Activated T-helper 1 cell treated with anti-CD3 and anti-CD28 coated beads, Interleukin-12 subunit alpha, Interleukin-12 subunit beta, Interleukin-2, Interleukin-4 antibody, amounts not matched to agents 30 ng/mL and 10 ng/mL and 1 ng/mL, durations not matched to agents 14 hours and 24 hours and 36 hours (primary cell): ENCODE measurements at regions of chr1 and their contacts with region 1.

Region 1: GRCh38 chr1:207404849-207405525 is 49.1 kb upstream of the CR2 start:
- DNase-seq: no peak
- H3K4me3 Mint-ChIP-seq: no peak overlapping the region
- H3K27ac Mint-ChIP-seq: no peak overlapping the region
- H3K4me1 Mint-ChIP-seq: peaks cover 21% of the 10 kb centered on the region
- H3K27me3 Mint-ChIP-seq: peaks cover 2% of the 10 kb centered on the region

Region 2: GRCh38 chr1:207077470-207078377 is 327.3 kb before region 1 on chr1:
- intact Hi-C with region 1: loop called (anchors 1 kb)
- DNase-seq: peak; percentile 60
- H3K4me3 Mint-ChIP-seq: no peak overlapping the region
- H3K27ac Mint-ChIP-seq: no peak overlapping the region
- H3K4me1 Mint-ChIP-seq: no peaks in the 10 kb centered on the region
- H3K27me3 Mint-ChIP-seq: peaks cover 19% of the 10 kb centered on the region

Region 3: DNA sequence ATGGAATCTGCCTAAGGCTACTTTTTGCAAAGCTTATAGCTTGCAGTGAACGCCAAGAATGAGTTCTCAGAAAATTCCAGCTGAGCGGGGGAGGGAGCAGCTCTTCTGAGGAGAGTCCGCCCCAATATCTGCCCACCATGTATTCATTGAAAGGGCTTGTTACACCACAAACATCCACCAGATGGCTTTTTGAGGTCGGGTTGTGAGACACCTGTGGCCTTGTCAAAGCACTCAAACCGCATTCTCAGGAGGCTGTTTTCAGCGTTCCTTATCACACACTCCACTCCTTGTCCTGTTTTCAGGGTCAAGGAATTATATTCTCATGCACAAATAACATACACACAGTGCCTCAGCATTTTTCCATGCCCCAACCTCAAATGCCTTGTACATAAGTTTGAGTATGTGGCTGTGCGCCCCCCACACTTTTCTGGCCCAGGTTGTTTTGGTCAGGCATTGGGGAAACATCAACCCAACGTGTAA is 320.2 kb before region 1 on chr1:
- intact Hi-C with region 1: loop called (anchors 1 kb)
- DNase-seq: peak; percentile 50
- H3K4me3 Mint-ChIP-seq: no peak overlapping the region
- H3K27ac Mint-ChIP-seq: peak overlapping the region; percentile 5
- H3K4me1 Mint-ChIP-seq: peaks cover 39% of the 10 kb centered on the region
- H3K27me3 Mint-ChIP-seq: peaks cover 12% of the 10 kb centered on the region

Region 4: GRCh38 chr1:207097871-207098324 is 307.1 kb before region 1 on chr1:
- intact Hi-C with region 1: loop called (anchors 1 kb)
- DNase-seq: peak; percentile 50
- H3K4me3 Mint-ChIP-seq: peak overlapping the region; percentile 27
- H3K27ac Mint-ChIP-seq: peak overlapping the region; percentile 69
- H3K4me1 Mint-ChIP-seq: peaks cover 40% of the 10 kb centered on the region
- H3K27me3 Mint-ChIP-seq: no peaks in the 10 kb centered on the region

Region 5: GRCh38 chr1:207181838-207182237 is 223.1 kb before region 1 on chr1:
- intact Hi-C with region 1: loop called (anchors 5 kb)
- DNase-seq: no peak
- H3K4me3 Mint-ChIP-seq: no peak overlapping the region
- H3K27ac Mint-ChIP-seq: no peak overlapping the region
- H3K4me1 Mint-ChIP-seq: no peaks in the 10 kb centered on the region
- H3K27me3 Mint-ChIP-seq: peaks cover 13% of the 10 kb centered on the region

Region 6: DNA sequence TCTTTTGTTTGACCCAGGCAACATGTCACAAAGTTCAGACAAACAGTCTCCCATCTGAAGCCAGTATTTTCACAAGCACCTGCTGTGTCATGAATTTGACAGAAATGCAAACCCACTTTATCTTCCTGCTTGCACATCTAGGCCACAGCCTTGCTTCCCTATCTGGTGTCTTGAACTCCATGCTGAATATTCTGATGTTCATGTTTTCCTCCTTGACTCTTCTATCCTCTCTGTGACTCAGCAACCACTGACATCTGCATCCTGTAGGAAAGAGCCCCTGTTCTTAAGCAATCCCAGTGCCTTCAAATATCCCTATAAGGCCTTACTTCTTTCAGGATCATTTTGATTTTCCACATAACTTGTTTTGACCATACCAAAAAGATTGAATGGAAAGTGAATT is 77.0 kb before region 1 on chr1:
- intact Hi-C with region 1: no loop called
- DNase-seq: no peak
- H3K4me3 Mint-ChIP-seq: peak overlapping the region; percentile 15
- H3K27ac Mint-ChIP-seq: peak overlapping the region; percentile 6
- H3K4me1 Mint-ChIP-seq: peaks cover 63% of the 10 kb centered on the region
- H3K27me3 Mint-ChIP-seq: no peaks in the 10 kb centered on the region

Region 7: DNA sequence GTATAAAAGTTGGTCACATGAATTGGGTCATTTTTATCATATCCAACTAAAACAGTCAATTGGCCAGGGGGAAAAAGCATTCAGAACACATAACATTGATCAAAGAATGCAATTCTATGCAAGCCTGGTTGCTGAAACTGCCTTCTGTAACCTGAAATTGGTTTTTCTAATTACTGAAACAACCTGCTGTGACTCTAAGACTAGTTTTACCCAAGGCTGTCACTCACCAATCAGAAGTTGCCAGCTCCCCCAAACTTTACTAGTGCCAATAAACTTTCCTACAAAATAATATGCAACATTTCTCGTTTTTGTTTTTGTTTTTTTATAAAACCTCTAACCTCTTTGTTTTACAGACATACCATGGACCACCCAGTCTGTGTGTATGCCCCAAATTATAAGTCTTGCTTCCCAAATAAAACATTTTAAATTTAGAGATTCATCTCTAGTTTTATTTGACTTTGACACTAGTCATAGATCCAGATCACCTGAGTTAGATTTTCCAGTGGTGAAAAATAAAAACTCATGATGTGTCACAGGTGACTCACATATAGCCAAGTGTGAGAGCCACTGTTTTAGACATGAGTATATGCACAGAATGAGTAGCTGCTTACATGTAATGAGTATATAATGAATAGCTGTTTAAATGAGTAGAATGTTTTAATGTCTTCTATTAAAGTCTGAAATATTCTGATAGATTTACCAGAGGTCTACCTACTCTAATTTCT is 15.1 kb before region 1 on chr1:
- intact Hi-C with region 1: loop called (anchors 1 kb)
- DNase-seq: no peak
- H3K4me3 Mint-ChIP-seq: no peak overlapping the region
- H3K27ac Mint-ChIP-seq: peak overlapping the region; percentile 81
- H3K4me1 Mint-ChIP-seq: peaks cover 7% of the 10 kb centered on the region
- H3K27me3 Mint-ChIP-seq: no peaks in the 10 kb centered on the region